HepG2 (cell line): ENCODE measurements at regions of chr2 and their contacts with region 1.

Region 1: GRCh38 chr2:185813682-185814081 is 75.1 kb downstream of the FSIP2 start:
- DNase-seq: peak; percentile 86
- ATAC-seq: peak; percentile 98
- H3K4me3 ChIP-seq: no peak overlapping the region
- H3K27ac ChIP-seq: no peak overlapping the region
- H3K4me1 ChIP-seq: peaks cover 29% of the 10 kb centered on the region
- H3K27me3 ChIP-seq: no peaks in the 10 kb centered on the region
- CTCF ChIP-seq: no peak
- EP300 ChIP-seq: peak; percentile 69 to 94
- POLR2A ChIP-seq: no peak
- RAD21 ChIP-seq: no peak

Region 2: GRCh38 chr2:186101616-186102015 is 287.9 kb after region 1 on chr2:
- CTCF ChIA-PET with region 1: no interaction called
- POLR2A ChIA-PET with region 1: no interaction called
- in situ Hi-C with region 1: no loop called
- intact Hi-C with region 1: loop called (anchors 10 kb)
- DNase-seq: no peak
- ATAC-seq: no peak
- H3K4me3 ChIP-seq: no peak overlapping the region
- H3K27ac ChIP-seq: no peak overlapping the region
- H3K4me1 ChIP-seq: peaks cover 6% of the 10 kb centered on the region
- H3K27me3 ChIP-seq: no peaks in the 10 kb centered on the region
- CTCF ChIP-seq: no peak
- EP300 ChIP-seq: no peak
- POLR2A ChIP-seq: no peak
- RAD21 ChIP-seq: no peak